ENCODE measurements at regions of chr22 and their contacts with region 1.

Region 1: GRCh38 chr22:30634471-30635233 is 929 bp upstream of the SLC35E4 start:
- DNase-seq: peak; percentile 80 to 95 (median 89)
- ATAC-seq: peak; percentile 68
- H3K4me3 ChIP-seq: peak overlapping the region; percentile 68
- H3K4me3 Mint-ChIP-seq: peak overlapping the region; percentile 89
- H3K27ac ChIP-seq: peak overlapping the region; percentile 73 to 76
- H3K27ac Mint-ChIP-seq: peak overlapping the region; percentile 94
- H3K4me1 ChIP-seq: peaks cover 36% of the 10 kb centered on the region
- H3K4me1 Mint-ChIP-seq: peaks cover 28% of the 10 kb centered on the region
- H3K27me3 ChIP-seq: no peaks in the 10 kb centered on the region
- H3K27me3 Mint-ChIP-seq: no peaks in the 10 kb centered on the region
- CTCF ChIP-seq: peak; percentile 91

Region 2: DNA sequence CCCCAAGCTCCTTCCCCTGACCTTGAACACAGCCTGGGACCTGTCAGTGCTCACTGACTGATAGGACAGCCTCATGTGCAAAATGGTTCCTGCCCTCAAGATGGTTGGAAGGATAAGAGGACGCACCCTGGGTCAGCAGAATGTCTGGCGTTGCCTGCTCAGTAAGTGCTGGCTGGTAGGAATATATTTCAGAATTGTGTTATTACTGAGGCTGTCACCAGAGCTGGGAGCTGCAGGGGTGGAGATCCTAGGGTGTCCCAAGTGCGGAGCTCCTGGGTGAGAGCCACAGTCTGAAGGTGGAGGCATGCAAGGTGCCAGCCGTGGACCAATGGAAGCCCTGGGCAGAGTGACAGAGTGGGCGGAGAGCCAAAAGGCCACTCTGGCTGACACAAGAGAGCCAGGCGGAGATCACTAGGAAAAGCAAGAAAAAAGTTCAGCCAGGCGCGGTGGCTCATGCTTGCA is 128.1 kb before region 1 on chr22:
- CTCF ChIA-PET with region 1: no interaction called
- POLR2A ChIA-PET with region 1: no interaction called
- intact Hi-C with region 1: no loop called
- DNase-seq: no peak
- ATAC-seq: no peak
- H3K4me3 ChIP-seq: no peak overlapping the region
- H3K4me3 Mint-ChIP-seq: no peak overlapping the region
- H3K27ac ChIP-seq: no peak overlapping the region
- H3K27ac Mint-ChIP-seq: no peak overlapping the region
- H3K4me1 ChIP-seq: peaks cover 4% of the 10 kb centered on the region
- H3K4me1 Mint-ChIP-seq: no peaks in the 10 kb centered on the region
- H3K27me3 ChIP-seq: peaks cover 28 to 32% of the 10 kb centered on the region in 2 experiments
- H3K27me3 Mint-ChIP-seq: peaks cover 43% of the 10 kb centered on the region
- CTCF ChIP-seq: no peak

Region 3: DNA sequence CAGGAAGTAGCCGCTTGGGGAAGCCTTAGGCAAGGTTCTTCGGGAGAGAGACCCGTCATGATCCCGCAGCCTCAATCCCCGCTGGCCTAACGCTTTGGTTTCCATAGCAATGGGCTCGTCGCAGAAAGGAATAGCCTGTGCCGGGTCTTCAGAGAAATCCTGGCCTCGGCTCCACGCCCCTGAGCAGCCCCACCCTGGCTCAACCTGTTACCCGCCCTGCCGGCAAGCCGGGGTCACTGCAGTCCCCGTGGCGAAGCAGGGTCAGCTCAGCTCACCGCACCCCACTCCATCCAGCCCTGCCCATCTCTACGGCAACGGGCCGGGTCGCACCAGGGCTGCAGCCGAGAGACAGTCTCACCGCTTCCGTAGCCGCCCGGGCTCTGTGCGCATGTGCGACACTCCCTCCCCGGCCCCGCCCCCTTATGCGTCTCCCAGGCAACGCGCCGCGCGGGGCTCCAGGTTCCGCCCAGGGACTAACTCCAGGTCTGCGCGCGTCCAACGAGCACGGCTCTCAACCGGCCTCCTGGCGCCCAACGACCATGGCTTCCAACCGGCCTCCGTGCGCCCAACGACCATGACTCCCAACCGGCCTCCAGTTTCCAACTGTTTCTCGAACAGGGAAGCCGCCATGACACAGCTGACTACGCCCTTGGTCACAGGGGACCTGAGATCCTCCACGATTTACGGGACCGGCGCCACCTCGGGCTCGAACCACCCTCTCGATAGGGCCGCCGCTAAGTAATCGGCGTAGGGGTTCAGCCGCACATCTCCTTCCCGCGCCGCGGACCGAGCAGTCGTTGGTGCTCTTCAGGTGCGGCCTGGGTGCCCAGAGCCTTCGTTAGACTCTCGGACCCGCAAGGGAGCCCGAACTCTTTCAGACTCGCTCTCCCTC is 33.1 kb after region 1 on chr22 and contains the start of gene DUSP18:
- CTCF ChIA-PET with region 1: interaction called, 13 read pairs
- POLR2A ChIA-PET with region 1: interaction called, 5 read pairs
- intact Hi-C with region 1: loop called (anchors 1 kb)
- DNase-seq: peak; percentile 89 to 98 (median 94)
- ATAC-seq: peak; percentile 90
- H3K4me3 ChIP-seq: peak within 1 kb of the TSS; percentile 97
- H3K4me3 Mint-ChIP-seq: peak within 1 kb of the TSS; percentile 93
- H3K27ac ChIP-seq: no peak within 1 kb of the TSS
- H3K27ac Mint-ChIP-seq: peak within 1 kb of the TSS; percentile 74
- H3K4me1 ChIP-seq: peaks cover 27% of the 10 kb centered on the region
- H3K4me1 Mint-ChIP-seq: peaks cover 15% of the 10 kb centered on the region
- H3K27me3 ChIP-seq: no peaks in the 10 kb centered on the region
- H3K27me3 Mint-ChIP-seq: no peaks in the 10 kb centered on the region
- CTCF ChIP-seq: no peak
- total RNA-seq, gene DUSP18: 5.7 to 6.2 TPM

Region 4: DNA sequence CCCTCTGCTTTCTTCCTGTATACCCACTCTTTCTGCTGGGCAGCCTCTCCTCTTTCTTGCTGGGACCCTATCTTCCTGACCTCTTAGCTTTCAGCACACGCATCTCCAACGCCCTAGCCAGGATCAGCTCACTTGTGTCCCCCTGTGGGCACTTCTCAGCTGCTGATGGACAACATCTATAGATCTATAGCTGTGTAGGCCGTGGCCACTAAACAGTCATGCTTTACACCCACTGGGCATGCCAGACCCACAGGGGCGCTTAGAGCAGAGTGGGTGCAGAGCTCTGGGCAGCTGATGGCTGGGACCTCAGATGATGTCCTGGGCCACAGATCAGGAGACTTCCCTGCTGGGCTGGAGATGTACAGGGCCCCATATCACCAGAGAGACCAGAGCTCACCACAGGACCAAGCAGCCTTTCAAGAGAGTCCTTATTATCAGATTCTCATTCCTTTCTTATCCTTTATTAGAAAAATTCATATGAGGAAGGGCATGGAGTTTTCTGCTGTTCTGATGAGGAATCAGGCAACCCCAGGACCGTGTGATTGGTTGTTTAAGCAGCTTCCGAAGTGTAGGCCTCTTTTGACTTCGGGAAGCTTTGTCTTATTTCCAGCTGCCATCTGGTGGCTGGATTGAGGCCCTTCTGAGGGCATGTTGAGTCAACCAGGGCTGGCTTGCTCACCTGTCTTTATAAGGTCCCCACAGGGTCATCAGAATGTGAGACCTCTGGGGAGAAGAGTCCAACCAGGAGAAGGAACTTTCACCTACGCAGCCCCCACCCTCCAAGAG is 120.5 kb after region 1 on chr22:
- CTCF ChIA-PET with region 1: interaction called, 9 read pairs
- POLR2A ChIA-PET with region 1: interaction called, 14 read pairs
- intact Hi-C with region 1: loop called in 1 of 2 experiments (anchors 1 kb)
- DNase-seq: peak; percentile 5 to 70 (median 32)
- ATAC-seq: peak; percentile 74
- H3K4me3 ChIP-seq: no peak overlapping the region
- H3K4me3 Mint-ChIP-seq: no peak overlapping the region
- H3K27ac ChIP-seq: no peak overlapping the region
- H3K27ac Mint-ChIP-seq: no peak overlapping the region
- H3K4me1 ChIP-seq: no peaks in the 10 kb centered on the region
- H3K4me1 Mint-ChIP-seq: no peaks in the 10 kb centered on the region
- H3K27me3 ChIP-seq: no peaks in the 10 kb centered on the region
- H3K27me3 Mint-ChIP-seq: no peaks in the 10 kb centered on the region
- CTCF ChIP-seq: no peak

Region 5: DNA sequence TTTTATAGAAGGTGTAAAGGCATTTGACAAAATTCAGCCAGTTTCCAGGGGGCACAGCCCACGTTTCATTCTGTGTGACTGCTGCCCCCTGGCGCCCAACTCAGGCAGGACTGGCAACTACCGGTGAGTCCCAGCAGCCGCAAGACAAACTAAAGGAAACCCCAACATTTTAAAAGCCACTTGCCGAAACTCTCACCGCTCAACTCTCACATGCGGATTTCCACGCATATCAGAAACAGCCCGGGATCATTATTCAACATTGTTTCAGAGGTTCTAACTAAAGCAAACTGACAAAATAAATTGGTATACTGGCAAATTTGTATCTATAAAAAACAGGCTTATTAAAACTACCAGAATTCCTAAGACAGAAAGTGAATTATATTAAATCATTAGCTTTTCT is 285.8 kb after region 1 on chr22:
- CTCF ChIA-PET with region 1: interaction called, 11 read pairs
- POLR2A ChIA-PET with region 1: interaction called, 10 read pairs
- intact Hi-C with region 1: loop called (anchors 1 kb)
- DNase-seq: peak; percentile 74 to 91 (median 82)
- ATAC-seq: peak; percentile 80
- H3K4me3 ChIP-seq: peak overlapping the region; percentile 1
- H3K4me3 Mint-ChIP-seq: peak overlapping the region; percentile 60
- H3K27ac ChIP-seq: no peak overlapping the region
- H3K27ac Mint-ChIP-seq: peak overlapping the region; percentile 25
- H3K4me1 ChIP-seq: peaks cover 23% of the 10 kb centered on the region
- H3K4me1 Mint-ChIP-seq: peaks cover 22% of the 10 kb centered on the region
- H3K27me3 ChIP-seq: no peaks in the 10 kb centered on the region
- H3K27me3 Mint-ChIP-seq: no peaks in the 10 kb centered on the region
- CTCF ChIP-seq: peak; percentile 99

Region 6: DNA sequence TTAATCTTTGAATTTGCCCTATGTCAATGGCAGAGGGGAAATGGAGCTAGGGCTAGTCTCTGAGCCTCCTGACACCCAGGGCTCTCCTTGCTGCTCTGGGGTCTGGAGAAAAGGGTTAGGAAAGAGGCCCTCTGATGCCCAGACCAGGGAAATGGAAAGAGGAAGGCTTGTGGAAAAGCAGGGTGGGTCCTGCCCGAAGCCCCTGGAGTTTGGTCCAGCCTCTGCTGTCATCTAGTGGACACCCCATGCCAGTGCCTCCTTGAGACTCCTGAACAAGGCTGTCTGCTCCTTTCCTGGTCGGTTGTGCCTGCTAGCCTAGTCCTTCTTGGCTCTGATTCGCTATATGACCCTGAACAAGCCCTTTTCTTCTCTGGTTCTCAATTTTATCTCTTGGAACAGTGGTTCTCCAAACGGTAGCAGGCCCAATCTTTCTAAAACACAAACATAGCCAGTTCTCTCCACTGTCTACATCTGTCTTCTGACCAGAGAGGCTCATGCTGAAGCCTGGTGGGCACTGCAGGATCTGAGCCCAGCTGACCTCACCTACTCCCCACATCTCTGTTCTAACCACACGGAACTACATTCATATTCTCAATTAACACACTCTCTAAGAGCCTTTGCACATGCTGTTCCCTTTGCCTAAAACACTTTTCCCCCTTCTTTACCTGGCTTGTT is 514.4 kb after region 1 on chr22:
- CTCF ChIA-PET with region 1: no interaction called
- POLR2A ChIA-PET with region 1: no interaction called
- intact Hi-C with region 1: loop called in 1 of 2 experiments (anchors 5 kb)
- DNase-seq: peak in 8 of 14 experiments; percentile 6 to 57 (median 24)
- ATAC-seq: no peak
- H3K4me3 ChIP-seq: no peak overlapping the region
- H3K4me3 Mint-ChIP-seq: no peak overlapping the region
- H3K27ac ChIP-seq: no peak overlapping the region
- H3K27ac Mint-ChIP-seq: no peak overlapping the region
- H3K4me1 ChIP-seq: no peaks in the 10 kb centered on the region
- H3K4me1 Mint-ChIP-seq: no peaks in the 10 kb centered on the region
- H3K27me3 ChIP-seq: peaks cover 0 to 4% of the 10 kb centered on the region in 2 experiments
- H3K27me3 Mint-ChIP-seq: no peaks in the 10 kb centered on the region
- CTCF ChIP-seq: peak; percentile 28

Region 7: GRCh38 chr22:31223786-31224191 is 589.1 kb after region 1 on chr22:
- CTCF ChIA-PET with region 1: no interaction called
- POLR2A ChIA-PET with region 1: no interaction called
- intact Hi-C with region 1: no loop called
- DNase-seq: no peak
- ATAC-seq: no peak
- H3K4me3 ChIP-seq: no peak overlapping the region
- H3K4me3 Mint-ChIP-seq: no peak overlapping the region
- H3K27ac ChIP-seq: peak overlapping the region in 1 of 2 donors; percentile 17
- H3K27ac Mint-ChIP-seq: peak overlapping the region; percentile 80
- H3K4me1 ChIP-seq: peaks cover 20% of the 10 kb centered on the region
- H3K4me1 Mint-ChIP-seq: peaks cover 59% of the 10 kb centered on the region
- H3K27me3 ChIP-seq: no peaks in the 10 kb centered on the region
- H3K27me3 Mint-ChIP-seq: no peaks in the 10 kb centered on the region
- CTCF ChIP-seq: no peak

Measured in CD4-positive, alpha-beta T cell (primary cell).